HepG2 (cell line): ENCODE measurements at regions of chr6 and their contacts with region 1.

Region 1: DNA sequence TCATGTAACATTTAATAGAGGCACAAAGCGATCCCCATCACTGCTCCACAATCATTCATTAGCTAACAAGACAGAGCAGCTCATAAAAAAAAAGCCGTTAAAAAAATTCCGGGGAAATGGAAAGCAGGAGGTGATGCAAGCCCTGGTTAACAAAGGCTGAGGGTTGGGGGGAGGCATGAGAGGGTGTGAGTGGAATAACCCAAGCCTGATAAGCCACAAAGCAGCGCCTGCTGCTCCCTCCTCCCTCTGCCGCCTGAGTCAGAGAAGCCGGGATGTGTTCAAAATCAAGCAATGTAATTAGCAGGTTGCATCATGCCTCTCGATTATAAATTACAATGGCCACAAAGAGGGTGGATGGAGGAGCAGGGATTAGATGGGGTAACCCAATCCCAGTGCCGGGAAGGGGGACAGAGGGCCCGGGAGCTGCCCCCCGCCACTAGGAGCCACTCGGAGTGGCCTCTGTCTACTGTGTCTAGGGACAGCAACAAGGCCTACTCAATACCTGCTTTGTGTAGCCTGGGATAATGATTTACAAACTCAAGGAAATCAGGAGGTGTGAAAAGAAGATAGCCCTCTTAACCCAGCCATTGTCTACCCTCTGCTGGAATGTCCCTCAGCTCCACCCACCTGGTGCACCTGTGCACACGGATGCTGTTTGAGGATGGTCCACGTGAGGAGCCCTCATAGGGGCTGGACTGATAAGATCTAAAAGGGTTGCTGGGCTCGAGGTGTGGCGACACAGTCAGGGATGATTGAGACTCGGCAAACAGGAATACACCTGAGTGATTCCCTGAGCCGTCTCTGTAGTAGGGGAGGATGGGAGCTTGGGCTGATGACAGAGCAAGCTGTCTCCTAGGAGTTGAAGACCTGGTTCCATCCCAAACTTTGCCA is 156.9 kb downstream of the VEGFA start:
- DNase-seq: peak; percentile 90
- ATAC-seq: peak; percentile 90
- H3K4me3 ChIP-seq: peak overlapping the region in 2 of 3 experiments; percentile 12 to 35; a peak in 2 of 6 replicates
- H3K27ac ChIP-seq: peak overlapping the region; percentile 69
- H3K4me1 ChIP-seq: peaks cover 74% of the 10 kb centered on the region
- H3K27me3 ChIP-seq: peaks cover 0 to 2% of the 10 kb centered on the region in 2 experiments; a peak in 1 of 5 replicates
- CTCF ChIP-seq: no peak; the same call in none of the 2 replicates
- EP300 ChIP-seq: peak in 1 of 2 experiments; percentile 93; a peak in 2 of 4 replicates
- POLR2A ChIP-seq: peak; percentile 31 to 44; a peak in 2 of 4 replicates
- RAD21 ChIP-seq: peak; percentile 35; the same call in 1 of the 2 replicates

Region 2: DNA sequence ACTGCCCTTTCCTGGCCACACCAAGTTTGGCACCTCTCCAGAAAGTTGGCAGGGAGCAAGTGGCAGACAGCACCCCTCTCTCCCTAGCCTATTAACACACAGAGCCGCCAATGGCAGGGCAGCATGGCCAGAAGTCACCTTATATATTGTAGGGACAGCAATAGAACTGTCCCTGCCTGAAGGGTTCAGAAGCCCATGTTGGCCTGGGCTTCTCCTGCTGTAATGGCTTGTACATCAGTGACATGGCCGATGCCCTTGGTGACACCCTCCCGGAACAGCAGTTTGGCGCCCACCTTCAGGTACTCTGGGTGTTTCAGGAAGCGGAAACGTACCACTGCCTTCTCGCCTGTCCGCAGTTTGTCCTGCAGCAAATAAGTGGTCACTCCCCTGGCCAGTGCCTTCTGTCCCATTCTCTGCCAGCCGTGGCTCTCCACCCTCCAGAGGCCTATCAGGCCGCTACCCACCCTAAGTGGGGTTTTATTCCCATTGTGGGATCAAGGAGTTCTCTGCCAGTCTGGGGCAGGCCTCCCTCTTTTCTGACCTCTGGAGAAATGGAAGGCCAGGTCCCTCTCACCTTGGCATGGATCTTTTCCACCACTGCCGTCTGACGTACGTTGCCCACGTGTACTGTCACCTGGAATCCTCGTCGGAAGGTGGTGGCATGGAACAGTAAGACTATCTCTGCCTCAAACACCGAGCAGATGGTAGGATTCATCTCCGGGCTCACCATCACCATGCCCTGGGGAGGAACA is 305.3 kb before region 1 on chr6:
- CTCF ChIA-PET with region 1: no interaction called
- POLR2A ChIA-PET with region 1: no interaction called
- in situ Hi-C with region 1: no loop called
- intact Hi-C with region 1: no loop called
- DNase-seq: no peak
- ATAC-seq: no peak
- H3K4me3 ChIP-seq: no peak overlapping the region
- H3K27ac ChIP-seq: no peak overlapping the region
- H3K4me1 ChIP-seq: peaks cover 14% of the 10 kb centered on the region
- H3K27me3 ChIP-seq: no peaks in the 10 kb centered on the region
- CTCF ChIP-seq: no peak
- EP300 ChIP-seq: no peak
- POLR2A ChIP-seq: peak in 1 of 2 experiments; percentile 22; a peak in 2 of 4 replicates
- RAD21 ChIP-seq: no peak

Region 3: GRCh38 chr6:43856005-43856765 is 70.7 kb before region 1 on chr6:
- CTCF ChIA-PET with region 1: interaction called, 3 read pairs
- POLR2A ChIA-PET with region 1: interaction called, 6 read pairs
- in situ Hi-C with region 1: no loop called
- intact Hi-C with region 1: loop called (anchors 1 kb)
- DNase-seq: peak; percentile 86
- ATAC-seq: peak; percentile 91
- H3K4me3 ChIP-seq: no peak overlapping the region
- H3K27ac ChIP-seq: no peak overlapping the region
- H3K4me1 ChIP-seq: peaks cover 85% of the 10 kb centered on the region
- H3K27me3 ChIP-seq: peaks cover 3 to 4% of the 10 kb centered on the region in 2 experiments; a peak in 1 of 5 replicates
- CTCF ChIP-seq: peak; percentile 99
- EP300 ChIP-seq: peak in 1 of 2 experiments; percentile 20; a peak in 1 of 4 replicates
- POLR2A ChIP-seq: no peak
- RAD21 ChIP-seq: peak; percentile 96

Region 4: DNA sequence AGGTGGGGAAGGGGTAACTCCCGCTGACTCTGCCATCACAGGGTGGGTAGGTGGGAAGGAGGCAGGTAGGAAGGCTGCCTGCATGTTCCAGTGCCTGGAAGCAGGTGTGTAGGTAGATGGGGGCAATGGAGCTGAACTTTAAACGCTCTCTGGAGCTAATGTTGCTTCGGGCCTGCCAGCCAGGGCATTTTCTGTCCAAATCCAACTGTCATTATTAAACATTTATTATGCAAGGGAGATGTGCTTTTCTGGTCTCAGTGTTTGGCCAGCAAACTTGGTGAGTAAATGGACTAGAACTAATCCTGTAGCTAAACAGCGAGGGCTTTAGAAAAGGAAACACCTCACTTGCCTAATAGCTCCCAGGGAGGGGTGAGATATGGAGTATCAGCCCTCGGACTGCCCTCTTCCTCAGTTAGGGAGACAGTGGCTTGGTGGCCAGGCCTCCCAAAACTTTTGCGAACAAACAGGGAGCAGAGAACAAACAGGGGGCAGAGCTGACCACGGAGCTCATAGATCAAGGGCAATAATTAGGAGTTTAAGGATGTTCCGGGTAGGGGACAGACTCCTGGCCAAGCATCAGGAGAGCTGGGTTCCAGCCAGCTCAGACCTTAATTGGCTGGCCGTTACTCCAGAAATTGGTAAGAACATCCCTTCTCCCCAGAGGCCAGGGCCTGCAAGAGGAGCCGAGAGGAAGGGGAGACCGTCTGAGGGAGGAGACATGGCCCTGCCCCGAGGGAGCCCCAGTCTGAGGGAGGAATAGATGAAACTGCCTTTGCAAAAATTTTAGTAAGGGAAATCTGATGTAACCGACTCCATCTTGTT is 25.8 kb before region 1 on chr6:
- CTCF ChIA-PET with region 1: no interaction called
- POLR2A ChIA-PET with region 1: interaction called, 24 read pairs
- in situ Hi-C with region 1: no loop called
- intact Hi-C with region 1: no loop called
- DNase-seq: peak; percentile 57
- ATAC-seq: peak; percentile 82
- H3K4me3 ChIP-seq: peak overlapping the region in 2 of 3 experiments; percentile 29 to 55; a peak in 4 of 6 replicates
- H3K27ac ChIP-seq: peak overlapping the region; percentile 54
- H3K4me1 ChIP-seq: peaks cover 67% of the 10 kb centered on the region
- H3K27me3 ChIP-seq: no peaks in the 10 kb centered on the region
- CTCF ChIP-seq: no peak
- EP300 ChIP-seq: peak in 1 of 2 experiments; percentile 67; a peak in 1 of 4 replicates
- POLR2A ChIP-seq: no peak
- RAD21 ChIP-seq: no peak

Region 5: GRCh38 chr6:43910638-43911353 is 16.1 kb before region 1 on chr6:
- CTCF ChIA-PET with region 1: no interaction called
- POLR2A ChIA-PET with region 1: interaction called, 133 read pairs
- in situ Hi-C with region 1: no loop called
- intact Hi-C with region 1: loop called (anchors 2 kb)
- DNase-seq: no peak
- ATAC-seq: no peak
- H3K4me3 ChIP-seq: peak overlapping the region in 2 of 3 experiments; percentile 1 to 51; a peak in 1 of 6 replicates
- H3K27ac ChIP-seq: no peak overlapping the region
- H3K4me1 ChIP-seq: peaks cover 77% of the 10 kb centered on the region
- H3K27me3 ChIP-seq: no peaks in the 10 kb centered on the region
- CTCF ChIP-seq: no peak
- EP300 ChIP-seq: no peak; a peak in 1 of 4 replicates
- POLR2A ChIP-seq: no peak
- RAD21 ChIP-seq: no peak

Region 6: DNA sequence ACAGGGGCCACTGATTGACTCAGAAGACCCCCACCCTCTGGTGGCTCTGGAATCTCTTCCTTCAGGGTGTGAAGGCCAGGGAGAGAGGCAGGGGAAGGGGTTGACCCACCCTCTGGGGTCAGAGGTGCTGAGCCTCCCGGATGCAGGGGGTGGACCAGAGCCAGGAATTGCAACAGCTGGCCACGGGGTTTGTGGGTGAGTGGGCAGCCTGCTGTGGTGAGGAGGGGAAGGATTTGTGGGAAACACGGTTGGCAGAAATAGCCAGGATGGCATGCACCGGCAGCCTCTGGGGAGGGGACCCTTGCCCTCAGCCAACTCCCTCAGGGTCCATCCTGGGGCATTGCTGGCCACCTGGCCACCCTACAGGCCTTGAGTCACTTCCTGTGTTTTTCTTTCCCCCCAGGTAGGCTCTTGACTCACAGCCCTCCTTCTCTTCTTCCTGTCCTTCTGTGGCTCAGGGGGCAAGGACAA is 107.5 kb after region 1 on chr6:
- CTCF ChIA-PET with region 1: no interaction called
- POLR2A ChIA-PET with region 1: no interaction called
- in situ Hi-C with region 1: no loop called
- intact Hi-C with region 1: no loop called
- DNase-seq: no peak
- ATAC-seq: peak; percentile 17
- H3K4me3 ChIP-seq: peak overlapping the region in 1 of 3 experiments; percentile 42; a peak in 1 of 6 replicates
- H3K27ac ChIP-seq: no peak overlapping the region
- H3K4me1 ChIP-seq: peaks cover 42% of the 10 kb centered on the region
- H3K27me3 ChIP-seq: peaks cover 0 to 11% of the 10 kb centered on the region in 2 experiments; a peak in 2 of 5 replicates
- CTCF ChIP-seq: no peak
- EP300 ChIP-seq: no peak
- POLR2A ChIP-seq: no peak
- RAD21 ChIP-seq: no peak